ENCODE measurements at regions of chr3 and their contacts with region 1.

Region 1: DNA sequence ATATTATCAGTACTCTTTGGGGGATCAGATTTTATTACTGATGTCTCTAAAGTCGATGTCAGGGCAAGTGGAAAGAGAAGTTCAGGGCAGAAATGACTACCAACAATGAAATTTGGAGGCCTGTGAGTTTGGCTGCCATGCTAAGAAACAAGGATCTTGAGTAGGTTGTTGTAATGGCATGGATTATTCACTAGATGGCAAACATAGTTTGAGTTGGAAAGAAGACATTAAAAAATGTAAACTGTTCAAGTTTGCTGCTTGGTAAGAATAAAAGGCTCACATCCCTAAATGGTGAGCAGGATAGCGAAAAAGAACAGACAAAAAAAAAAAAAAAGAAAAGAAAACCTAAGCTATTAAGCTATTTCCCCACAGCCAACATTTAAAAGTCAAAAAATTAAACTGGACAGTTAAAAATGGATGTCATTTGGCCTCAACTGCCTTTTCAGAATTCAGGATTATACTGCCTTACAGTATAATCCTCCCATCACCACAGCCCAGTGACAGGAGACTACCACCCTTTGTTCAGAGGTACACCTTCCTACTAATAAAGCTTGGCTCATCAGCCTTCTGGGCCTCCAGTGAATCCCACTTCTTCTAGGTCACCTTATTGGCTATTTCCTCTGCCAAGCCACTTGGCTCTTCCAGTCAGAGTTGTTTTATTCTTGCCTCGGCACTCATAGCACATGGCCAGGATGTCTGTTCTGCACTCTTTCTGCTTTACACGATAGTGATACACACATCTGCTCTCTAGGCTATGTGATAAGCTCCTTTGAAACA is 163.7 kb downstream of the PLD1 start:
- DNase-seq: peak; percentile 52
- H3K27ac ChIP-seq: no peak overlapping the region
- CTCF ChIP-seq: peak; percentile 83

Region 2: DNA sequence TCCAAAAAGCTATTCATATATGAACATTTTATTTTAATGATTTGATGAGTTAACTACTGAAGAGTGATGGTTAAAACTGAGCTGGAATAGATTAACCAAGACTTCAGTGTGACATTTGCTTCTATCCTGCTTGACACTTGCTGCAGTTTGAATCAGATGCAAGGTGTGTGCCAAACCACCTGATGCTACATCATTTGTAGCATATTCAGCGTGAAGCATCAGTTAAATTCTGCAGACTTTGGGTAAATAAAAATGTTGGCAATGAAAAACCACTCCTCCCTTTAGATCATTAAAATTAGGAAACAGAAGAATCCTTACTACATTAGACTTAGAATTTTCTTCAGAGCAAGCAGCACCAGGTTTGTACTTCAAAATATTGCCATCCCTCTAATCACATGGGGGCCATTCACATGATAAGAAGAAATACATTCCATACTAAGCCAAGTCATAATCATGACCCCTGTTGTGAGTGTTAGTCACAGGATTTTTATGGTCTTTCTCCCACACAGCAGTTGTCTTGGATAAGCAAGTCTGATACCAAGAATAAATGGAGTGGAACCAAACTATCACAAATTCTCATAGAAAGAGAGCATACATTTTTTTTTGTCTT is 25.6 kb before region 1 on chr3:
- CTCF ChIA-PET with region 1: no interaction called
- POLR2A ChIA-PET with region 1: no interaction called
- DNase-seq: no peak
- H3K27ac ChIP-seq: no peak overlapping the region
- CTCF ChIP-seq: no peak

Region 3: GRCh38 chr3:171829841-171830517 is 183.4 kb after region 1 on chr3:
- CTCF ChIA-PET with region 1: interaction called, 10 read pairs
- POLR2A ChIA-PET with region 1: no interaction called
- DNase-seq: peak; percentile 37
- H3K27ac ChIP-seq: peak overlapping the region; percentile 35; the same call in 1 of the 2 replicates
- CTCF ChIP-seq: peak; percentile 64